Activated CD4-positive, alpha-beta T cell treated with anti-CD3 and anti-CD28 coated beads, Interleukin-2, amount 10 ng/mL, durations not matched to agents 24 days and 14 days (primary cell): ENCODE measurements at regions of chr2 and their contacts with region 1.

Region 1: DNA sequence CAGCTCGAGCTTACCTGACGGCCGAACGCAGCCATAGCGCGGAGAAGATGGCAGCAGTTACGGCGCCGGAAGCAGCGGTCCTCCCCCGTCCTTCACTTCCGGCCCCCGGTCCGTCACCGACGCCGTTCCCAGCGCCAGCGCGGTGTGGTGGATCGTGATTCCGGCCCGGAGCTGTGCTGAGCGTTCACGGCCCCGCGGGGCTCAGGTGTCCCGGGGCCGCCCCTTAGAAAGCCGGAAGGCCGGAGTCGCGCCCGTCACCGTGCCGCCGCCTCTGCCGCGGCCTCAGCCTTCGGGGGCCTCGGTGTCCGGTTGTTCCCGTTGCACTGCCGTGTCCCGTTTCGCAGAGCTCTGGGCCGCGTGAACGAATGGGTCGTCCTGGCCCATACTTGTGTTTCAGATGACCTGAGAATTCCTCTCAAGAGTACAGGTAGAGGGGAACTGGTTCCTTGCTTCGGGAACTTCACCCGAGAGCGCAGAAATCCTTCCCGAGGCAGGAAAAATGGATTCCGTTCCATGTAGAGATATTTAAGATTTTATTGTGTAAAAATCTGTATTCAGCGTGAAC is at the start of gene MTERF4:
- DNase-seq: peak; percentile 97
- H3K4me3 Mint-ChIP-seq: peak within 1 kb of the TSS; percentile 94
- H3K27ac Mint-ChIP-seq: peak within 1 kb of the TSS; percentile 98
- H3K4me1 Mint-ChIP-seq: peaks cover 29% of the 10 kb centered on the region
- H3K27me3 Mint-ChIP-seq: no peaks in the 10 kb centered on the region
- total RNA-seq, gene MTERF4: 39.3 and 43.9 TPM in 2 replicates

Region 2: DNA sequence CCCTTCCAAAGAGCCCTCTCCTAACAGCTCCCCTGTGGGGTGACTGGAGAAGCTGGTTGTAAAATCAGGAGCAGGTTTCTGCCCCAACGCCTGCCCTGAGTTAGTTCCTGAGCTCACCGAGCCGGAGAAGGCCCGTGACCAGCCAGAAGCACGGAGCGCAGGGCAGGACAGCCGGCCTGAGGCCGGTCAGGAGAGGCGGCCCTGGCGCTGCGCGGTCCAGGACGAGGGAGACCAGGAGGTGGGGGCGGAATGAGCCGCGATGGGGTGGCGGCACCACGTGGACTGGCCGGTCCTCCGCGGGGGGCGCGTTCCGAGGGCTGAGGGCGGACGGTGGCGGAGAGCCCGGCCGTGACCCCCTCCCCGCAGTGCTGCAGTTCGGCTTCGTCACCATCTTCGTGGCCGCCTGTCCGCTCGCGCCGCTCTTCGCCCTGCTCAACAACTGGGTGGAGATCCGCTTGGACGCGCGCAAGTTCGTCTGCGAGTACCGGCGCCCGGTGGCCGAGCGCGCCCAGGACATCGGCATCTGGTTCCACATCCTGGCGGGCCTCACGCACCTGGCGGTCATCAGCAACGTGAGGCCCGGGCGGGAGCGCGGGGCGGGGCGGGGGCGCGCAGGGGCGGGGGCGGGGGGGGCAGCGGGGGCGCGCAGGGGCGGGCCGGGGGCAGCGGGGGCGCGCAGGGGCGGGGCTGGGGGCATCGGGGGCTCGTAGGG is 115.2 kb after region 1 on chr2:
- intact Hi-C with region 1: loop called (anchors 5 kb)
- DNase-seq: peak; percentile 82
- H3K4me3 Mint-ChIP-seq: peak overlapping the region; percentile 81
- H3K27ac Mint-ChIP-seq: peak overlapping the region; percentile 73
- H3K4me1 Mint-ChIP-seq: peaks cover 10% of the 10 kb centered on the region
- H3K27me3 Mint-ChIP-seq: peaks cover 24% of the 10 kb centered on the region

Region 3: GRCh38 chr2:241637000-241637791 is 534.9 kb after region 1 on chr2 and contains the starts of genes ATG4B and THAP4:
- intact Hi-C with region 1: loop called (anchors 5 kb)
- DNase-seq: peak; percentile 95
- H3K4me3 Mint-ChIP-seq: peak within 1 kb of the TSS; percentile 89
- H3K27ac Mint-ChIP-seq: peak within 1 kb of the TSS; percentile 93
- H3K4me1 Mint-ChIP-seq: peaks cover 41% of the 10 kb centered on the region
- H3K27me3 Mint-ChIP-seq: no peaks in the 10 kb centered on the region
- total RNA-seq, gene ATG4B: 109 and 115 TPM in 2 replicates
- total RNA-seq, gene THAP4: 62.0 and 63.9 TPM in 2 replicates